Aorta (tissue), 5 donors: ENCODE measurements at regions of chr7 and their contacts with region 1.

Region 1: GRCh38 chr7:28179120-28180030 is 1.2 kb downstream of the JAZF1 start:
- DNase-seq: peak; percentile 85 to 91
- ATAC-seq: peak; percentile 81
- H3K4me3 ChIP-seq: peak overlapping the region; percentile 87 to 99
- H3K27ac ChIP-seq: peak overlapping the region; percentile 8 to 77
- H3K4me1 ChIP-seq: no peaks in the 10 kb centered on the region
- H3K27me3 ChIP-seq: no peaks in the 10 kb centered on the region

Region 2: GRCh38 chr7:28106321-28106829 is 73.0 kb before region 1 on chr7:
- intact Hi-C with region 1: loop called in 1 of 2 experiments (anchors 5 kb)
- DNase-seq: no peak
- ATAC-seq: no peak
- H3K4me3 ChIP-seq: no peak overlapping the region
- H3K27ac ChIP-seq: no peak overlapping the region
- H3K4me1 ChIP-seq: peaks cover 0 to 2% of the 10 kb centered on the region in 2 donors
- H3K27me3 ChIP-seq: no peaks in the 10 kb centered on the region

Region 3: DNA sequence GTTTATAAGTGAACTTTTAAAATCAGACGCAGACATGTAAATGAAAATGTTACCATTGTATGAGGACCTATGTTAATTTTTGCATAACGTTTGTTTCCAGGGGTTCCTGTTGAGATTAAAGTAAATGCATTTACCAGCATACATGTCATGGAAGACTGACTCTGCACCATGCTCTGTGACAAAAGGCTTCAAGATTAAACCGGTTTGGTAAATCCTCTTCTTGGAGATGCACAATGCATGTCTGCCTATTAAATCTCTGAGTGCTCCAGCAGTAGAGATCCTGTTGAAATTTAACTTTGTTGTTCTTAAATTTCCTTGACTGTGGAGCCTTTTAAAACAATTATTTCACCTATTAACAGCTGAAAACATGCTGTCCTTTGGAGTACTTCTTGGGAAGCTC is 37.8 kb after region 1 on chr7:
- intact Hi-C with region 1: no loop called
- DNase-seq: no peak
- ATAC-seq: no peak
- H3K4me3 ChIP-seq: no peak overlapping the region
- H3K27ac ChIP-seq: no peak overlapping the region
- H3K4me1 ChIP-seq: no peaks in the 10 kb centered on the region
- H3K27me3 ChIP-seq: no peaks in the 10 kb centered on the region